ENCODE measurements at regions of chr21 and their contacts with region 1.

Region 1: GRCh38 chr21:33199516-33200217 is 30.1 kb upstream of the IFNAR2 start:
- DNase-seq: peak; percentile 95
- ATAC-seq: peak; percentile 78
- H3K4me3 ChIP-seq: no peak overlapping the region
- H3K27ac ChIP-seq: no peak overlapping the region
- H3K4me1 ChIP-seq: peaks cover 8% of the 10 kb centered on the region
- H3K27me3 ChIP-seq: peaks cover 4% of the 10 kb centered on the region; the same call in 1 of the 2 replicates
- CTCF ChIP-seq: peak; percentile 97
- POLR2A ChIP-seq: no peak
- RAD21 ChIP-seq: peak; percentile 97

Region 2: GRCh38 chr21:32834916-32835235 is 364.8 kb before region 1 on chr21:
- CTCF ChIA-PET with region 1: interaction called, 4 read pairs
- POLR2A ChIA-PET with region 1: no interaction called
- dilution Hi-C with region 1: no loop called
- in situ Hi-C with region 1: no loop called
- intact Hi-C with region 1: loop called (anchors 2 kb)
- DNase-seq: no peak
- ATAC-seq: no peak
- H3K4me3 ChIP-seq: no peak overlapping the region
- H3K27ac ChIP-seq: no peak overlapping the region
- H3K4me1 ChIP-seq: no peaks in the 10 kb centered on the region
- H3K27me3 ChIP-seq: peaks cover 22% of the 10 kb centered on the region
- CTCF ChIP-seq: no peak
- POLR2A ChIP-seq: no peak
- RAD21 ChIP-seq: no peak

Region 3: DNA sequence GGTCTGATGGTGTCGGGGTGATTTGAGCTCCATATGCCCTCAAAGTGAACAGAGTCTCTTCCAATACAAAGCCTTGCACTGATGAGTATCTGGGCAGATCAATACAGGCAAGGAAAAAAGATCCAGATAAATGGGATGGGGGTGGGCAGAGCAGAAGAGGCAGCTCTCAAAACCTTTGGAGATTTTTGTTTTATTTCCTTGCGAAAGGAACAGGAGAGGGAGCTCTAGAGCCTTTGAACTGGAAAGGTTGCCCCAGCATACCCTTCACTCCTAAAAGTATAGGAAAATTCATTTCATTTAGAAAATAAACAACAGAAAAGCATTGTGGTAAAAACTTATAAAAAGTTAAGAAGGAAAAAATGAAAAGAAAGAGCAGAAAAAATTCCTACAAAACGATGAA is 205.4 kb before region 1 on chr21:
- CTCF ChIA-PET with region 1: interaction called, 9 read pairs
- POLR2A ChIA-PET with region 1: no interaction called
- dilution Hi-C with region 1: no loop called
- in situ Hi-C with region 1: no loop called
- intact Hi-C with region 1: loop called (anchors 1 kb)
- DNase-seq: peak; percentile 31
- ATAC-seq: peak; percentile 77
- H3K4me3 ChIP-seq: no peak overlapping the region
- H3K27ac ChIP-seq: no peak overlapping the region
- H3K4me1 ChIP-seq: no peaks in the 10 kb centered on the region
- H3K27me3 ChIP-seq: peaks cover 26% of the 10 kb centered on the region
- CTCF ChIP-seq: peak; percentile 63
- POLR2A ChIP-seq: no peak
- RAD21 ChIP-seq: peak; percentile 69

Region 4: DNA sequence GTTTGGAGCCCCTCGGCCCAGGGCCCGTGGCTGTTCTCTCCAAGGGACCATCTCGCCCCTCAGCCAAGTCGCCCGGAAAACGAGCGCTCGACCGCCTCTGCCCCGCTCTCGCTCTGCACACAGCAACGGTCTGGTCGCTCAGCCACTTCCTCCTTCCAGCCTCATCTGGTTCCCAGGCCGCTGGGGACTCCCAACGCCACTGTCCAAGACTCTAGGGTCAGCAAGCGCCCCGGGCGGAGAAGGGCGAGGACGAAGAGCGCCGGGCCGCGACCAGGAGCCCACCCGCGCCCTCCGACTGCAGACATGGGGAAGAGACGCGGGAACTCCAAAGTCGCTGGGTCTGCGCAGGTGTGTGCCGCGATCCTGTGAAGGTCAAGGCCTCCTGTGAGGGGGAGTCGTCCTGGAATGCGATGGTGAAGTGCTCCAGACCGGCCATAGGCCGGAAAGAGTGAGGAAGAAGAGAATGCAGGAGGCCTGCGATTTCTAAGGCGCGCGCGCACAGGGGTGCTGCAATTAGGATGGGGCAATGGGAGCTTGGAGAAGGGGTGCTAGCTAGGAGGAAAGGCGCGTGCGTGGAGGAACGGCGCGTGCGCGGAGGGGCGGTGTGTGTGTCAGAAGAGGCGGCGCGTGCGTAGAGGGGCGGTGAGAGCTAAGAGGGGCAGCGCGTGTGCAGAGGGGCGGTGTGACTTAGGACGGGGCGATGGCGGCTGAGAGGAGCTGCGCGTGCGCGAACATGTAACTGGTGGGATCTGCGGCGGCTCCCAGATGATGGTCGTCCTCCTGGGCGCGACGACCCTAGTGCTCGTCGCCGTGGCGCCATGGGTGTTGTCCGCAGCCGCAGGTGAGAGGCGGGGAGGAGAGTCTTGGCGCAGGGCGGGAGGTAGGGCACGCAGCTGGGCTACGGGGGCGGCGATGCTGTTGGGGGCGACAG is 124.9 kb after region 1 on chr21 and contains the start of gene IFNAR1:
- CTCF ChIA-PET with region 1: no interaction called
- POLR2A ChIA-PET with region 1: interaction called, 3 read pairs
- dilution Hi-C with region 1: no loop called
- in situ Hi-C with region 1: no loop called
- intact Hi-C with region 1: loop called (anchors 2 kb)
- DNase-seq: peak; percentile 98
- ATAC-seq: peak; percentile 93
- H3K4me3 ChIP-seq: peak within 1 kb of the TSS; percentile 77
- H3K27ac ChIP-seq: peak within 1 kb of the TSS; percentile 92
- H3K4me1 ChIP-seq: no peaks in the 10 kb centered on the region
- H3K27me3 ChIP-seq: no peaks in the 10 kb centered on the region
- CTCF ChIP-seq: no peak
- POLR2A ChIP-seq: peak; percentile 71; the same call in 1 of the 2 replicates
- RAD21 ChIP-seq: no peak
- total RNA-seq, gene IFNAR1: 9.9 and 12.8 TPM in 2 replicates

Region 5: DNA sequence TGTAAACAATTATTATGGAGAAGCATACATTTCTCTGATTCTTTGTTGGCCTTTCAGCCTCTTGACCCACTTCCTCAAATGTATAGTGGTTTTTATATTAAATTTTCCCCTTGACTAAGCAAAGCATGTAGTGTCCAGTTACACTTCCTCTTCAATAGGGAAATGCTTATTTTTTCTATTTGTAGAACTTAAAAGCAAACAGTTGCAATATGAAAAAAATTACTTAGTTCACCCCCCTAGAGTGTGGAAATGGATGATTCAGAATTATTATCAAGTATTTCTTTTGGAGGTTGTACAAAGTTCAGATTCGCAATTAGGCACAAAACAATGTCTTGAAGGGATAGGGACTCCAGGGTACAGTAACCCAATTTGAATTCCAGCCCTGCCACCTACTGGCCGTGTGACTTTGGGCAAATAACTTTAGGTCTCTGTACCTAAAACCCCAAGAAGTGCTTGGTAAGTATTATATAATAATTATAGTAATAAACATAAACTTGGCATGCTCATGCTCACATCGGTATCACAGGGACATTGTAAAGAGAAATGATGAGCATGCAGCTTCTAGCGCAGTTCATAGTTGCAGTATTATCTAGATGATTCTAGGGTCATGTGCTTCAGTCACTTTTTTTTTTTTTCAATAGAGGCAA is 174.9 kb after region 1 on chr21:
- CTCF ChIA-PET with region 1: interaction called, 3 read pairs
- POLR2A ChIA-PET with region 1: no interaction called
- dilution Hi-C with region 1: no loop called
- in situ Hi-C with region 1: no loop called
- intact Hi-C with region 1: loop called (anchors 1 kb)
- DNase-seq: peak; percentile 58
- ATAC-seq: peak; percentile 82
- H3K4me3 ChIP-seq: no peak overlapping the region
- H3K27ac ChIP-seq: no peak overlapping the region
- H3K4me1 ChIP-seq: peaks cover 6% of the 10 kb centered on the region; the same call in 1 of the 2 replicates
- H3K27me3 ChIP-seq: no peaks in the 10 kb centered on the region; the same call in 1 of the 2 replicates
- CTCF ChIP-seq: peak; percentile 57
- POLR2A ChIP-seq: no peak
- RAD21 ChIP-seq: peak; percentile 64

Region 6: GRCh38 chr21:33608559-33608958 is 408.9 kb after region 1 on chr21:
- CTCF ChIA-PET with region 1: no interaction called
- POLR2A ChIA-PET with region 1: no interaction called
- dilution Hi-C with region 1: no loop called
- in situ Hi-C with region 1: no loop called
- intact Hi-C with region 1: loop called (anchors 5 kb)
- DNase-seq: peak; percentile 65
- ATAC-seq: peak; percentile 70
- H3K4me3 ChIP-seq: no peak overlapping the region
- H3K27ac ChIP-seq: no peak overlapping the region; the same call in 1 of the 2 replicates
- H3K4me1 ChIP-seq: no peaks in the 10 kb centered on the region
- H3K27me3 ChIP-seq: no peaks in the 10 kb centered on the region
- CTCF ChIP-seq: no peak
- POLR2A ChIP-seq: no peak
- RAD21 ChIP-seq: no peak